Naive thymus-derived CD4-positive, alpha-beta T cell (primary cell): ENCODE measurements at regions of chr1 and their contacts with region 1.

Region 1: GRCh38 chr1:111222308-111223125 is 5.0 kb upstream of the CHI3L2 start:
- DNase-seq: peak in 8 of 9 donors; percentile 51 to 83 (median 62)
- ATAC-seq: peak; percentile 62
- H3K4me3 ChIP-seq: peak overlapping the region; percentile 55
- H3K4me3 Mint-ChIP-seq: peak overlapping the region; percentile 77 to 92 (median 84)
- H3K27ac ChIP-seq: peak overlapping the region; percentile 77
- H3K27ac Mint-ChIP-seq: peak overlapping the region; percentile 85 to 100 (median 97)
- H3K4me1 ChIP-seq: peaks cover 92% of the 10 kb centered on the region in 2 donors
- H3K4me1 Mint-ChIP-seq: peaks cover 78 to 100% (median 97%) of the 10 kb centered on the region in 7 donors
- H3K27me3 ChIP-seq: no peaks in the 10 kb centered on the region
- H3K27me3 Mint-ChIP-seq: no peaks in the 10 kb centered on the region

Region 2: GRCh38 chr1:109466125-109466451 is 1756.4 kb before region 1 on chr1:
- CTCF ChIA-PET with region 1: no interaction called
- POLR2A ChIA-PET with region 1: no interaction called
- intact Hi-C with region 1: no loop called
- DNase-seq: peak in 1 of 9 donors; percentile 17
- ATAC-seq: no peak
- H3K4me3 ChIP-seq: peak overlapping the region; percentile 44
- H3K4me3 Mint-ChIP-seq: peak overlapping the region; percentile 45 to 89 (median 82)
- H3K27ac ChIP-seq: no peak overlapping the region
- H3K27ac Mint-ChIP-seq: peak overlapping the region in 3 of 9 donors; percentile 31 to 73 (median 67)
- H3K4me1 ChIP-seq: peaks cover 0 to 3% of the 10 kb centered on the region in 2 donors
- H3K4me1 Mint-ChIP-seq: peaks cover 0 to 11% (median 7%) of the 10 kb centered on the region in 7 donors
- H3K27me3 ChIP-seq: peaks cover 9 to 16% of the 10 kb centered on the region in 2 donors
- H3K27me3 Mint-ChIP-seq: peaks cover 68 to 89% (median 79%) of the 10 kb centered on the region in 5 donors

Region 3: DNA sequence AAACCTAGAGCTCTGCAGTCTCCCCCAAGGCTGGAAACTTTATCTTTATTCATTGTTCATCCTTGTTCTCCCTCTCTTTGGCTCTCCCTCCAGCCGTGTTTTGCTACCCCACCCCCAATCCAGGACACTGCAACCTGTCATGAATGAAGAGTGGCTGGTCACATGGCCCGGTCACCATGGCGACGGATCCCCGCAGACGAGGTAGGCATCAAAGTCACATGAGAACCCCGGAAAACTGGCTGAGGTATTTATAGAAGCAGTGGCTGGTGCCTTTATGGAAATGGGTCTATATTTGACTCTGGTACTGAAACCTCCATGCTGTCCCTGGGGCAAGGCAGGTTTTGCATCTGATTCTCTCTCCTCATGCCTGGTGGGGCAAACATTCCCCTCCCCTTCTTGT is 1085.6 kb before region 1 on chr1:
- CTCF ChIA-PET with region 1: no interaction called
- POLR2A ChIA-PET with region 1: no interaction called
- intact Hi-C with region 1: no loop called
- DNase-seq: peak in 6 of 9 donors; percentile 14 to 37 (median 30)
- ATAC-seq: peak; percentile 41
- H3K4me3 ChIP-seq: no peak overlapping the region
- H3K4me3 Mint-ChIP-seq: peak overlapping the region in 8 of 10 donors; percentile 1 to 53 (median 14)
- H3K27ac ChIP-seq: no peak overlapping the region
- H3K27ac Mint-ChIP-seq: peak overlapping the region in 1 of 9 donors; percentile 53
- H3K4me1 ChIP-seq: peaks cover 0 to 3% of the 10 kb centered on the region in 2 donors
- H3K4me1 Mint-ChIP-seq: peaks cover 7 to 21% (median 16%) of the 10 kb centered on the region in 7 donors
- H3K27me3 ChIP-seq: peaks cover 0 to 3% of the 10 kb centered on the region in 2 donors
- H3K27me3 Mint-ChIP-seq: peaks cover 21 to 56% (median 50%) of the 10 kb centered on the region in 5 donors

Region 4: GRCh38 chr1:110872745-110873720 is 349.5 kb before region 1 on chr1 and contains the start of gene CD53:
- CTCF ChIA-PET with region 1: no interaction called
- POLR2A ChIA-PET with region 1: no interaction called
- intact Hi-C with region 1: loop called in 1 of 2 experiments (anchors 5 kb)
- DNase-seq: peak in 8 of 9 donors; percentile 19 to 82 (median 76)
- ATAC-seq: peak; percentile 86
- H3K4me3 ChIP-seq: peak within 1 kb of the TSS; percentile 84
- H3K4me3 Mint-ChIP-seq: peak within 1 kb of the TSS; percentile 94 to 100 (median 96)
- H3K27ac ChIP-seq: peak within 1 kb of the TSS; percentile 91
- H3K27ac Mint-ChIP-seq: peak within 1 kb of the TSS; percentile 95 to 99 (median 98)
- H3K4me1 ChIP-seq: peaks cover 24 to 48% of the 10 kb centered on the region in 2 donors
- H3K4me1 Mint-ChIP-seq: peaks cover 34 to 72% (median 52%) of the 10 kb centered on the region in 7 donors
- H3K27me3 ChIP-seq: no peaks in the 10 kb centered on the region
- H3K27me3 Mint-ChIP-seq: no peaks in the 10 kb centered on the region
- total RNA-seq, gene CD53: 237 to 513 (median 287) TPM

Region 5: GRCh38 chr1:111045033-111045722 is 177.3 kb before region 1 on chr1:
- CTCF ChIA-PET with region 1: no interaction called
- POLR2A ChIA-PET with region 1: no interaction called
- intact Hi-C with region 1: no loop called
- DNase-seq: no peak
- ATAC-seq: no peak
- H3K4me3 ChIP-seq: no peak overlapping the region
- H3K4me3 Mint-ChIP-seq: no peak overlapping the region
- H3K27ac ChIP-seq: no peak overlapping the region
- H3K27ac Mint-ChIP-seq: no peak overlapping the region
- H3K4me1 ChIP-seq: no peaks in the 10 kb centered on the region
- H3K4me1 Mint-ChIP-seq: peaks cover 0 to 2% (median 0%) of the 10 kb centered on the region in 7 donors
- H3K27me3 ChIP-seq: no peaks in the 10 kb centered on the region
- H3K27me3 Mint-ChIP-seq: peaks cover 0 to 63% (median 26%) of the 10 kb centered on the region in 5 donors

Region 6: DNA sequence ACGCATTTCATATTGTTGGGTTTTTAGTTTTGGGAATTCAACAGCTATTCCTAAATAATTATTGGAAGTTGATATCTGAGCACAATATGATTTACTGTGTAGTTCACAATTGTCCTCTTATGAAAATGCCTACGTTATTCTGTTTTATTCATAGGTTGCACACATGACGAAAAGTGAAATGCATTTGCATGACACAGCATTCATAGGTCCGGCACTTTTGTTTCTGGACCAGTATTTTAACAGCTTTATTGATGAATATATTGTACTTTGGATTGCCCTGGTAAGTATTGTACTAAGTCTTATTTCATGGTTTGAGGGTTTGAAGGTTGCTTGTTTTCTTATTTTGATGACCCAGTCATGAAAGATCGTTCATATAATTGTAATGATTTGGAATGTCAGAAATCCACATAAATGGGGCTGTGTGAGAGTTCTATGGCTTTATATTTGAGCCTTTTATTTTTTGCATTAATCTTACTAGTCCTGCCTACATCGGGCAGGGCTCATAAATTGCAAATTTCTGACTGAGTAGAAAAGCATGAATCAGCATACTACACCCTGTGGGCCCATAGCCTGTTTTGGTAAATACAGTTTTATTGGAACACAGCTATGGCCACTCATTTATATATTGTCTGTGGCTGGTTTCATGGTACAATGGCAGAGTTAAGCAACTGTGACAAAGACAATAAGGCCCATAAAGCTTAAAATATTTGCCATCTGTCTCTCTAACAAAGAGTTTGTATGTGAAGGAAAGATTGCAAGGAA is 39.0 kb before region 1 on chr1:
- CTCF ChIA-PET with region 1: interaction called, 6 read pairs
- POLR2A ChIA-PET with region 1: interaction called, 1,128 read pairs
- intact Hi-C with region 1: loop called (anchors 5 kb)
- DNase-seq: no peak
- ATAC-seq: no peak
- H3K4me3 ChIP-seq: no peak overlapping the region
- H3K4me3 Mint-ChIP-seq: no peak overlapping the region
- H3K27ac ChIP-seq: peak overlapping the region; percentile 31
- H3K27ac Mint-ChIP-seq: peak overlapping the region in 8 of 9 donors; percentile 17 to 99 (median 78)
- H3K4me1 ChIP-seq: peaks cover 7 to 43% of the 10 kb centered on the region in 2 donors
- H3K4me1 Mint-ChIP-seq: peaks cover 53 to 98% (median 91%) of the 10 kb centered on the region in 7 donors
- H3K27me3 ChIP-seq: no peaks in the 10 kb centered on the region
- H3K27me3 Mint-ChIP-seq: no peaks in the 10 kb centered on the region

Region 7: DNA sequence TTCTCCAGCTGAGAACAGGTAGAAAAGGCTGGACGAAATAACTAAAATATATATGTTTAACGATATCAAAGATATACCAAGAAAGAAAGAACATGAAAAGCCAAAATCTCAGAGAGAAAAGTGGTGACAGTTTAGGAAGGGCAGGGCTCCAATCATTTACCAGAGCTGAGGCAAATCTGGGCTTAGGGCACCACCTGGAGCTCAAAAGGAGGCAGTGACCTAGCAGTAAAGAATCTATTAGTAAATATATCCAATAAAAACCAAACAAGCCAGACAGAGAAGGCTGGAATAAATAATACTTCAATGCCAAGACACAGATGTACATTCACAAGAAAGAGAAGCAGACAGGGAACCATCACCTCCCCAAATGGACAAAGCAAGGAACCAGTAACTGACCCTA is 111.7 kb after region 1 on chr1:
- CTCF ChIA-PET with region 1: interaction called, 77 read pairs
- POLR2A ChIA-PET with region 1: interaction called, 7 read pairs
- intact Hi-C with region 1: loop called (anchors 1 kb)
- DNase-seq: peak in 7 of 9 donors; percentile 60 to 78 (median 66)
- ATAC-seq: peak; percentile 83
- H3K4me3 ChIP-seq: no peak overlapping the region
- H3K4me3 Mint-ChIP-seq: no peak overlapping the region
- H3K27ac ChIP-seq: no peak overlapping the region
- H3K27ac Mint-ChIP-seq: peak overlapping the region in 1 of 9 donors; percentile 29
- H3K4me1 ChIP-seq: peaks cover 0 to 7% of the 10 kb centered on the region in 2 donors
- H3K4me1 Mint-ChIP-seq: peaks cover 3 to 14% (median 6%) of the 10 kb centered on the region in 7 donors
- H3K27me3 ChIP-seq: no peaks in the 10 kb centered on the region
- H3K27me3 Mint-ChIP-seq: peaks cover 0 to 2% (median 0%) of the 10 kb centered on the region in 5 donors

Region 8: DNA sequence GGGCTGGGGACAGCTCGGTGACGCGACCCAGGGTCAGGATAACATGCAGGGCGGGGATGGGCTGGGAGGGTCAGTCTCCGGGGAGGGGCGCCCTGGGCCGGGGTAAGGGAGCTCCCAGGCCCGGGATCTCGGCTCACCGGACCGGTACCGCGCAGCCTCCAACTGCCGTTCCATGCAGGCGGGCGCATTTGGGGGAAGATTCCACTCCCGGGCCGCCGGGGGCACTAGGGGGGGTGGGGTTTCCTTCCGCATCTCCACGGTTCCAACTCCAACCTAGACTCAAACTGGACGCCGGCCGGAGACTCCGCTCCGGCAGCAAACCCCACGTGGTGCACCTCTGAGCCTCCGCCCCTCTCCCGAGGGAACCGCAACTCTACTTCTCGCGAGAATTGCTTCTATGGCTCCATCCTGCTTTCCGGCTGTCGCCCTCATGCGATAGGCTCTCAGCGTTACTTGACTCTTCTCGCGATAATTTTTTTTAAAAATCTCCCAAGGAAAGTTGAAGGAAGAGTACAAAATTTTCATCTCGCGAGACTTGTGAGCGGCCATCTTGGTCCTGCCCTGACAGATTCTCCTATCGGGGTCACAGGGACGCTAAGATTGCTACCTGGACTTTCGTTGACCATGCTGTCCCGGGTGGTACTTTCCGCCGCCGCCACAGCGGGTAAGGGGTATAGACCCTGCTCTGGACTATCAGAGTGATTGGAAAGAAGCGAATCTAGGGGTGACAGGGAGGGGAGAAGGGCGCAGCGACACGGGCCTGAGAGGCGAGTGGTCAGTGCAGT is 226.6 kb after region 1 on chr1 and contains the starts of genes ATP5PB and WDR77:
- CTCF ChIA-PET with region 1: interaction called, 4 read pairs
- POLR2A ChIA-PET with region 1: interaction called, 4 read pairs
- intact Hi-C with region 1: loop called (anchors 2 kb)
- DNase-seq: peak; percentile 66 to 97 (median 94)
- ATAC-seq: peak; percentile 98
- H3K4me3 ChIP-seq: peak within 1 kb of the TSS; percentile 89
- H3K4me3 Mint-ChIP-seq: peak within 1 kb of the TSS; percentile 97 to 100 (median 100)
- H3K27ac ChIP-seq: peak within 1 kb of the TSS; percentile 98
- H3K27ac Mint-ChIP-seq: peak within 1 kb of the TSS; percentile 95 to 100 (median 99)
- H3K4me1 ChIP-seq: peaks cover 51 to 55% of the 10 kb centered on the region in 2 donors
- H3K4me1 Mint-ChIP-seq: peaks cover 43 to 92% (median 78%) of the 10 kb centered on the region in 7 donors
- H3K27me3 ChIP-seq: no peaks in the 10 kb centered on the region
- H3K27me3 Mint-ChIP-seq: no peaks in the 10 kb centered on the region
- total RNA-seq, gene ATP5PB: 64.9 to 298 (median 98.7) TPM
- total RNA-seq, gene WDR77: 20.7 to 39.9 (median 29.5) TPM

Region 9: GRCh38 chr1:111769517-111770146 is 547.1 kb after region 1 on chr1:
- CTCF ChIA-PET with region 1: interaction called, 4 read pairs
- POLR2A ChIA-PET with region 1: no interaction called
- intact Hi-C with region 1: loop called in 1 of 2 experiments (anchors 2 kb)
- DNase-seq: peak in 7 of 9 donors; percentile 26 to 68 (median 55)
- ATAC-seq: peak; percentile 82
- H3K4me3 ChIP-seq: no peak overlapping the region
- H3K4me3 Mint-ChIP-seq: no peak overlapping the region
- H3K27ac ChIP-seq: no peak overlapping the region
- H3K27ac Mint-ChIP-seq: peak overlapping the region in 4 of 9 donors; percentile 5 to 56 (median 40)
- H3K4me1 ChIP-seq: no peaks in the 10 kb centered on the region
- H3K4me1 Mint-ChIP-seq: peaks cover 0 to 10% (median 5%) of the 10 kb centered on the region in 7 donors
- H3K27me3 ChIP-seq: no peaks in the 10 kb centered on the region
- H3K27me3 Mint-ChIP-seq: no peaks in the 10 kb centered on the region